ENCODE measurements at regions of chrX and their contacts with region 1.

Region 1: GRCh38 chrX:23907498-23908218 is at the starts of genes APOO and CXorf58:
- DNase-seq: peak; percentile 54
- ATAC-seq: peak; percentile 95
- H3K4me3 ChIP-seq: peak within 1 kb of the TSS; percentile 78
- H3K27ac ChIP-seq: peak within 1 kb of the TSS; percentile 73
- H3K4me1 ChIP-seq: no peaks in the 10 kb centered on the region; the same call in 1 of the 2 replicates
- H3K27me3 ChIP-seq: no peaks in the 10 kb centered on the region
- CTCF ChIP-seq: peak; percentile 73 to 83 (median 76)
- EP300 ChIP-seq: no peak; a peak in 1 of 4 replicates
- POLR2A ChIP-seq: peak; percentile 81
- RAD21 ChIP-seq: peak; percentile 51
- polyA plus RNA-seq, gene APOO: 41.8 to 42.9 TPM
- polyA plus RNA-seq, gene CXorf58: not detected

Region 2: GRCh38 chrX:23046443-23046842 is 861.2 kb before region 1 on chrX:
- CTCF ChIA-PET with region 1: no interaction called
- POLR2A ChIA-PET with region 1: no interaction called
- RAD21 ChIA-PET with region 1: no interaction called
- SMC1A ChIA-PET with region 1: no interaction called
- in situ Hi-C with region 1: no loop called
- intact Hi-C with region 1: no loop called
- DNase-seq: no peak
- ATAC-seq: no peak
- H3K4me3 ChIP-seq: no peak overlapping the region
- H3K27ac ChIP-seq: no peak overlapping the region
- H3K4me1 ChIP-seq: no peaks in the 10 kb centered on the region
- H3K27me3 ChIP-seq: peaks cover 0 to 2% of the 10 kb centered on the region in 2 experiments; a peak in 1 of 4 replicates
- CTCF ChIP-seq: no peak
- EP300 ChIP-seq: no peak
- POLR2A ChIP-seq: no peak
- RAD21 ChIP-seq: no peak

Region 3: GRCh38 chrX:23919148-23919547 is 11.5 kb after region 1 on chrX:
- CTCF ChIA-PET with region 1: no interaction called
- POLR2A ChIA-PET with region 1: no interaction called
- RAD21 ChIA-PET with region 1: no interaction called
- SMC1A ChIA-PET with region 1: no interaction called
- in situ Hi-C with region 1: no loop called
- intact Hi-C with region 1: no loop called
- DNase-seq: no peak
- ATAC-seq: no peak
- H3K4me3 ChIP-seq: no peak overlapping the region
- H3K27ac ChIP-seq: no peak overlapping the region
- H3K4me1 ChIP-seq: no peaks in the 10 kb centered on the region
- H3K27me3 ChIP-seq: no peaks in the 10 kb centered on the region
- CTCF ChIP-seq: no peak
- EP300 ChIP-seq: no peak
- POLR2A ChIP-seq: no peak
- RAD21 ChIP-seq: no peak

Region 4: DNA sequence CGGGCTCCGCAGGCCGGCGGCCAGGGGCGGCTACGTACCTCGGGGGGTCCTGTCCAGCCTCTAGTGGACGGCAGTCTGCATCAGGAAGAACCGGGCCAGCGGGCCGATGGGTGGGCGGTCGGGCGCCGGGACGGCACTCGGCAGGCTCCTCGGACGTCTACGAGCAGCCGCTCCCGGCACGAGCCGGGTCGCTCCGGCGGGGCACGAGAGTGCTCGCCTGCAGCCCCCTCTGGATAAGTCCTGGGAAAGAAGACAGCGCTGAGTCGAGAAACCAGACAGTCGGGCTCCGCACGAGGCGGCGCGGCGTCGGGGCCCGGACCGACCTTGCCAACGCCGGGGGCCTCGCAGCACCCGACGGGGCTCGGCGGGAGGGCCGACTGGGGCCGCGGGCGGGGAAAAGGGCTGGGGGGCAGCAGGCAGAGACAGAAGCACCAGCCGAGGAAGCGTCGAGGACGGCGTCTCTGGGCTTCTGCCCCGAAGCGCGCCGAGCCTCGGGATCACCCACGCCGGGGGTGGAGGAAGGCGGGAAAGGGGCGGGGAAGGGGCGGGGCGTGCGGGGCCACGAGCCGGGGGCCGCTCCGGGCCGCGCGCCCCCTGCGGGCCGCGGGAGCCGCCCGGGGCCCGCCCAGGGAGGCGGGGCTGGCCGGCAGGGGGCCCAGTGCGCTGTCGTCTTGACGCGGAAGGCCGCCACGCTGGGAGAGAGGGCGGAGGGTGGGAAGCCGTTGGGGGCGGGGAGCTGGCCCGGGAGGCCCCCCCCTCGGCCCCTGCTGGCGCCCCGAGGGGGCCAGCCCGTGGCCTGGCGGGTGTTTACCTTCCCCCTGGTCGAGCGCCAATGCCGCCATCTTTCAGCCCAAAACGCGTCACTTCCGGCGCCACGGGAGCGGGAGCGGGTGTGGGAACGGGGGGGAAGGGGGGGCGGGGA is 117.4 kb after region 1 on chrX:
- CTCF ChIA-PET with region 1: interaction called, 10 read pairs
- POLR2A ChIA-PET with region 1: interaction called, 7 read pairs
- RAD21 ChIA-PET with region 1: interaction called, 11 read pairs
- SMC1A ChIA-PET with region 1: interaction called, 5 read pairs
- in situ Hi-C with region 1: no loop called
- intact Hi-C with region 1: loop called (anchors 5 kb)
- DNase-seq: peak; percentile 43
- ATAC-seq: peak; percentile 88
- H3K4me3 ChIP-seq: peak overlapping the region; percentile 77
- H3K27ac ChIP-seq: peak overlapping the region; percentile 78
- H3K4me1 ChIP-seq: no peaks in the 10 kb centered on the region
- H3K27me3 ChIP-seq: no peaks in the 10 kb centered on the region; a peak in 1 of 4 replicates
- CTCF ChIP-seq: peak in 2 of 3 experiments; percentile 5 to 27; a peak in 1 of 6 replicates
- EP300 ChIP-seq: no peak; a peak in 1 of 4 replicates
- POLR2A ChIP-seq: peak; percentile 95
- RAD21 ChIP-seq: no peak